Activated CD8-positive, alpha-beta T cell treated with anti-CD3 and anti-CD28 coated beads for 36 hours (primary cell): ENCODE measurements at regions of chr19 and their contacts with region 1.

Region 1: GRCh38 chr19:35822579-35822978 is 9.9 kb upstream of the PRODH2 start:
- DNase-seq: no peak
- ATAC-seq: no peak
- H3K4me3 Mint-ChIP-seq: no peak overlapping the region
- H3K27ac Mint-ChIP-seq: no peak overlapping the region
- H3K4me1 Mint-ChIP-seq: peaks cover 4% of the 10 kb centered on the region
- H3K27me3 Mint-ChIP-seq: peaks cover 18% of the 10 kb centered on the region
- CTCF ChIP-seq: no peak

Region 2: DNA sequence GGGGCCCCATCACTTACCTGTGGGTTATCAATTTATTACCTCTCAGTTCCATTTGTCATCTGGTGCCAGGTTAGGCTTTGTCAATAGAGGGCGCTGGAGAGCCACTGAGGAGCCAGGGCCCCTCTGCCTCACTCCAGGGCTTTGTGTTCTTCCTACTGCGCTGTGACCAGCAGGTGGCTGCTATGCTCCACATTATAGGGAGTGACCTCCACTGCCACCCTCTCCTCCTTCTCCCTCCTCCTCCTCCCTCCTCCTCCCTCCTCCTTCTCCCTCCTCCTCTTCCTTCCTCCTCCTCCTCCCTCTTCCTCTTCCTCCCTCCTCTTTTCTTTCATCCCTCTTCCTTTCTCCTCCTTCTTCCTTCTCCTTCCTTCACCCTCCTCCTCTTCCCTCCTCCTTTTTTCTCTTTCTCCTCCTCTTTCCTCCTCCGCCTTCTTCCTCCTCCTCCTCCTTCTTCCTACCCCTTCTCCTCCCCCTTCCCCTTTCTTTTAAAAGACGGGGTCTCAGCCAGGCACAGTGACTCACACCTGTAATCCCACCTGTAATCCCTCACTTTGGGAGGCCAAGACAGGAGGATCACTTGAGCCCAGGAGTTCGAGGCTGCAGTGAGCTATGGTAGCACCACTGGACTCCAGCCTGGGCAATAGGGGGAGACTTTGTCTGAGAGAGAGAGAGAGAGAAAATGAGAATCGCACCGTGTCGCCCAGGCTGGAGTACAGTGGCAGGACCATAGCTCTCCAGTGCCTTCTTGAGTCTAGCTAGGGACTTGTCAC is 128.6 kb before region 1 on chr19:
- CTCF ChIA-PET with region 1: interaction called, 37 read pairs
- POLR2A ChIA-PET with region 1: interaction called, 4 read pairs
- intact Hi-C with region 1: loop called (anchors 5 kb)
- DNase-seq: peak; percentile 96
- ATAC-seq: peak; percentile 97
- H3K4me3 Mint-ChIP-seq: no peak overlapping the region
- H3K27ac Mint-ChIP-seq: peak overlapping the region; percentile 58
- H3K4me1 Mint-ChIP-seq: peaks cover 25% of the 10 kb centered on the region
- H3K27me3 Mint-ChIP-seq: no peaks in the 10 kb centered on the region
- CTCF ChIP-seq: peak; percentile 99

Region 3: GRCh38 chr19:35740423-35741202 is 82.0 kb before region 1 on chr19:
- CTCF ChIA-PET with region 1: interaction called, 15 read pairs
- POLR2A ChIA-PET with region 1: no interaction called
- intact Hi-C with region 1: no loop called
- DNase-seq: peak; percentile 99
- ATAC-seq: peak; percentile 72
- H3K4me3 Mint-ChIP-seq: peak overlapping the region; percentile 87
- H3K27ac Mint-ChIP-seq: peak overlapping the region; percentile 96
- H3K4me1 Mint-ChIP-seq: peaks cover 24% of the 10 kb centered on the region
- H3K27me3 Mint-ChIP-seq: no peaks in the 10 kb centered on the region
- CTCF ChIP-seq: no peak

Region 4: GRCh38 chr19:35748106-35749020 is 74.2 kb before region 1 on chr19 and contains the start of gene LIN37:
- CTCF ChIA-PET with region 1: interaction called, 10 read pairs
- POLR2A ChIA-PET with region 1: no interaction called
- intact Hi-C with region 1: no loop called
- DNase-seq: peak; percentile 100
- ATAC-seq: peak; percentile 81
- H3K4me3 Mint-ChIP-seq: peak within 1 kb of the TSS; percentile 99
- H3K27ac Mint-ChIP-seq: peak within 1 kb of the TSS; percentile 96
- H3K4me1 Mint-ChIP-seq: peaks cover 36% of the 10 kb centered on the region
- H3K27me3 Mint-ChIP-seq: no peaks in the 10 kb centered on the region
- CTCF ChIP-seq: no peak
- total RNA-seq, gene LIN37: 4.5 to 7.8 TPM

Region 5: DNA sequence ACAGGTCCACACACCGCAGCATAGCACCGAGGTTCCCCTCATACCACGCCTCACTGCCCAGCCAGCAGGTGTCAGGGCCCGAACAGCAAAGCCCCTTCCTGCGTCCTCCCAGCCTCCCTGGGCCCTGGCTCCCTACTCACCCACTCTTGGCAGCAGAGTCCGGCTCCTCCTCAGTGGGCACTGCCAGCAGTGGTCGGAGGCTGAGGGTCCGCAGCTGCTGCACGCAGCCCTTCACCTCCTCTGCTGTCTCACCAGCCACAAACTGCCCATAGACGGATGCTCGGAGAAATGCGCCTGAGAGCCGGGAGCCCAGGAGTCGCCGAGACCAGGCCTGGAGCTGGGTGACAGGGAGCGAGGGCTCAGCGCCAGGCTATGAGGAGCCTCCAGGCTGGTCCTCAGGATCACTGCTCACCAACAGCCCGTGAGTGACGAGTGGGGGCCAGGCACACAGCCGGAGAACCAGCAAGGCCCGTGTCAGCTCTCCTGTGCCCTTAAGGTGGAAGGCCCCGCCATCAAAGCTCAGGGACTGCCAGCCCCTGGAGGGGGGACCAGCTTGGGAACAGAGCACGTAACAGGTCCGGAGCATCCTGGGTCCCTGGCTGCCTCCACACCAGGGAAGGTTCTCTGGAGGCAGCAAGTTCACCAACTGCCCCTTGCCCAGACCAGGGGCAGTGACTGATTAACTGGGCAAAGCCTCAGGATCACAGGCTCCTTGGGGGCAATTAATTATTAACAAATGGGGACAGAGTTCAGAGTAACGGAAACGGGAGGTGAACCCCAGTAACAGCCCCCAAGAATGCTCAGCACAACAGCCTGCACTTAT is 10.1 kb before region 1 on chr19 and contains the start of gene PRODH2:
- CTCF ChIA-PET with region 1: no interaction called
- POLR2A ChIA-PET with region 1: no interaction called
- intact Hi-C with region 1: no loop called
- DNase-seq: no peak
- ATAC-seq: no peak
- H3K4me3 Mint-ChIP-seq: no peak within 1 kb of the TSS
- H3K27ac Mint-ChIP-seq: no peak within 1 kb of the TSS
- H3K4me1 Mint-ChIP-seq: no peaks in the 10 kb centered on the region
- H3K27me3 Mint-ChIP-seq: peaks cover 4% of the 10 kb centered on the region
- CTCF ChIP-seq: no peak
- total RNA-seq, gene PRODH2: not detected

Region 6: DNA sequence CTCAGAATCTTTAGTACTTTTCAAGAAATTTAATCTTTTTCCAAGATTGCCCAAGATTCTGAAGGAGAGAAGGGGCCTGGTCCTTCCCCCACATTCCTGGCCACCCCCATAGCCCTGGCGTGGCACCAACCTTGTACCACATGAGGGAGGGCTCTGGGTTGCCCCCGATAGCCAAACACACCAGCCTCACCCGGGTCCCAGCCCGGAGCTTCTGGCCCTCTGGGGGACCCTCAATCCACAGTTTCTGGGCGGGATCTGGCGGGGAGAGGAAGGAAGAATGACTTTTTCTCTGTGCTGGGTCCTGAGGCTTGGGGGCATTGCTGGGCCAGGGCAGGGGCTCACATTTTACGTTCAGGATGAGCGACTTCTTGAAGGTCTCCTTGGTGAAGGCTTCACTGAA is 25.3 kb after region 1 on chr19:
- CTCF ChIA-PET with region 1: no interaction called
- POLR2A ChIA-PET with region 1: no interaction called
- intact Hi-C with region 1: no loop called
- DNase-seq: no peak
- ATAC-seq: no peak
- H3K4me3 Mint-ChIP-seq: no peak overlapping the region
- H3K27ac Mint-ChIP-seq: no peak overlapping the region
- H3K4me1 Mint-ChIP-seq: peaks cover 17% of the 10 kb centered on the region
- H3K27me3 Mint-ChIP-seq: peaks cover 49% of the 10 kb centered on the region
- CTCF ChIP-seq: no peak